Calu3 (cell line): ENCODE measurements at regions of chr6 and their contacts with region 1.

Region 1: GRCh38 chr6:160455541-160456213 is 107.5 kb downstream of the SLC22A3 start:
- DNase-seq: peak; percentile 70
- H3K4me3 Mint-ChIP-seq: no peak overlapping the region
- H3K27ac Mint-ChIP-seq: no peak overlapping the region
- H3K4me1 Mint-ChIP-seq: no peaks in the 10 kb centered on the region
- H3K27me3 Mint-ChIP-seq: no peaks in the 10 kb centered on the region
- CTCF ChIP-seq: peak; percentile 98

Region 2: DNA sequence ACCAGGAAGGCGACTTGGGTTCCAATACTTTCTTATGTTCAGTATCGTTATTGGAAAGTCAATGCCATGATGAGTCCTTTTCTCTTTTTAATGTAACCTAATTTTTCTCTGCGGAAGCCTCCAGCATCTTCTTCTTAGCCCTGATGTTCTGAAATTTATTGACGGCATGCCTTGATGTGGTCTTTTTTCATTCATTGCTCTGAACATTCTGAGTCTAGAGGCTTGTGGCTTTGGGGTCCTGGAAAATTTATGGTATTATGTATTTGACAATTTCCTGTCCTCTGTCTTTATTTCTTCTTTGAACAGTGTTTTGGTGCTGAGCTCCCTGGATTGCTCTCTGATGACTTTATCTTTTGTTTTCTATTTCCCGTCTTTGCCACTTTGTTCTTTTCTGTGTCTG is 593.6 kb before region 1 on chr6:
- CTCF ChIA-PET with region 1: interaction called, 9 read pairs
- intact Hi-C with region 1: loop called (anchors 1 kb)
- DNase-seq: no peak
- H3K4me3 Mint-ChIP-seq: no peak overlapping the region
- H3K27ac Mint-ChIP-seq: no peak overlapping the region
- H3K4me1 Mint-ChIP-seq: peaks cover 7% of the 10 kb centered on the region
- H3K27me3 Mint-ChIP-seq: peaks cover 34% of the 10 kb centered on the region
- CTCF ChIP-seq: no peak

Region 3: GRCh38 chr6:159959165-159959975 is 496.3 kb before region 1 on chr6:
- CTCF ChIA-PET with region 1: no interaction called
- intact Hi-C with region 1: loop called (anchors 5 kb)
- DNase-seq: no peak
- H3K4me3 Mint-ChIP-seq: no peak overlapping the region
- H3K27ac Mint-ChIP-seq: no peak overlapping the region
- H3K4me1 Mint-ChIP-seq: no peaks in the 10 kb centered on the region
- H3K27me3 Mint-ChIP-seq: peaks cover 56% of the 10 kb centered on the region
- CTCF ChIP-seq: no peak

Region 4: GRCh38 chr6:160088069-160088783 is 367.5 kb before region 1 on chr6:
- CTCF ChIA-PET with region 1: interaction called, 11 read pairs
- intact Hi-C with region 1: loop called (anchors 1 kb)
- DNase-seq: peak; percentile 56
- H3K4me3 Mint-ChIP-seq: no peak overlapping the region
- H3K27ac Mint-ChIP-seq: no peak overlapping the region
- H3K4me1 Mint-ChIP-seq: no peaks in the 10 kb centered on the region
- H3K27me3 Mint-ChIP-seq: no peaks in the 10 kb centered on the region
- CTCF ChIP-seq: peak; percentile 73

Region 5: DNA sequence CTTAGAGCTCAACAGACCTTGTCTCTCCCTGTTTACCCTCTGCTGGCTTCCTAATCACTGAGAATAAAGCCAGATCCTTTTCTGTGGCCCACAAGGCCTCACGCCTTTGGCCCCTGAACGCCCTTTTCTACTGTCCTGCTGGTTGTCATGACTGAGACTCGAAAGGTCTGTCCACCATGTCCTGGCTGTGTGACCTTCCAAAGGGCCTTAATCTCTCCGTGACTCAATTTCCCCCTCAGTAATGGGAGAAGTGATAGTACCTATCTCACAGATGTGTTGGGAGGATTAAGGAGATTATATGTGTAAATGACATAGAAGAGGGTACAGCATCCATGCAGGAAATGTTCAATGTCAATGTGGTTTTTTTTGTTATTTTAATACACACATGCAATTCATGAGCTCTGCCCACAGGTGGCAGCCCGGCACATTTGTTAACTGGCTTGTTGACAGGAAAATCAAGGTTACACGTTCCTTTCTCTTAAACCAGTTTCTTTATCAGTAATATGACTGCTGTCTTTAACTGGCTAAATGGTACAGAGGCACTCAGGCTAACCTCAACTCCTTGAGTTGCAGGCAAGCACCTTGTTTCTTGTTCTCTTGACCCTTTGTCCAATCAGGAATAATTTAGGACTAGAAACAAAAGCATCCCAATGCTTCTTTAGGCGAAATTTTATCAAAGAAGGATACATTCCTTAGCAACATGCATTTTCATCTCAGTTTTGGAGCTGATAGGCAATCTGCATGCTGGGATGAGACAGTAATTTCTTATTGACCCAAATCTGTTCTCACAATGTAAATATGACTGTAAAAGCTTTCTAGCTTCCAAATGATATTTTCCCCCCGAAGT is 317.5 kb before region 1 on chr6:
- CTCF ChIA-PET with region 1: interaction called, 24 read pairs
- intact Hi-C with region 1: loop called (anchors 1 kb)
- DNase-seq: peak; percentile 64
- H3K4me3 Mint-ChIP-seq: no peak overlapping the region
- H3K27ac Mint-ChIP-seq: no peak overlapping the region
- H3K4me1 Mint-ChIP-seq: peaks cover 24% of the 10 kb centered on the region
- H3K27me3 Mint-ChIP-seq: no peaks in the 10 kb centered on the region
- CTCF ChIP-seq: peak; percentile 63

Region 6: GRCh38 chr6:160221423-160221822 is 234.3 kb before region 1 on chr6:
- CTCF ChIA-PET with region 1: interaction called, 21 read pairs
- intact Hi-C with region 1: loop called (anchors 1 kb)
- DNase-seq: no peak
- H3K4me3 Mint-ChIP-seq: no peak overlapping the region
- H3K27ac Mint-ChIP-seq: no peak overlapping the region
- H3K4me1 Mint-ChIP-seq: peaks cover 11% of the 10 kb centered on the region
- H3K27me3 Mint-ChIP-seq: peaks cover 15% of the 10 kb centered on the region
- CTCF ChIP-seq: no peak

Region 7: GRCh38 chr6:160534050-160534696 is 78.5 kb after region 1 on chr6:
- CTCF ChIA-PET with region 1: no interaction called
- intact Hi-C with region 1: loop called (anchors 2 kb)
- DNase-seq: peak; percentile 64
- H3K4me3 Mint-ChIP-seq: no peak overlapping the region
- H3K27ac Mint-ChIP-seq: no peak overlapping the region
- H3K4me1 Mint-ChIP-seq: no peaks in the 10 kb centered on the region
- H3K27me3 Mint-ChIP-seq: no peaks in the 10 kb centered on the region
- CTCF ChIP-seq: peak; percentile 94